ENCODE measurements at regions of chr5 and their contacts with region 1.

Region 1: GRCh38 chr5:180328296-180329137 is 24.6 kb downstream of the GFPT2 start:
- DNase-seq: peak; percentile 68 to 90 (median 86)
- ATAC-seq: peak; percentile 94
- H3K4me3 ChIP-seq: no peak overlapping the region
- H3K4me3 Mint-ChIP-seq: no peak overlapping the region
- H3K27ac ChIP-seq: no peak overlapping the region
- H3K27ac Mint-ChIP-seq: no peak overlapping the region
- H3K4me1 ChIP-seq: no peaks in the 10 kb centered on the region
- H3K4me1 Mint-ChIP-seq: no peaks in the 10 kb centered on the region
- H3K27me3 ChIP-seq: no peaks in the 10 kb centered on the region
- H3K27me3 Mint-ChIP-seq: peaks cover 14% of the 10 kb centered on the region
- CTCF ChIP-seq: peak; percentile 89

Region 2: DNA sequence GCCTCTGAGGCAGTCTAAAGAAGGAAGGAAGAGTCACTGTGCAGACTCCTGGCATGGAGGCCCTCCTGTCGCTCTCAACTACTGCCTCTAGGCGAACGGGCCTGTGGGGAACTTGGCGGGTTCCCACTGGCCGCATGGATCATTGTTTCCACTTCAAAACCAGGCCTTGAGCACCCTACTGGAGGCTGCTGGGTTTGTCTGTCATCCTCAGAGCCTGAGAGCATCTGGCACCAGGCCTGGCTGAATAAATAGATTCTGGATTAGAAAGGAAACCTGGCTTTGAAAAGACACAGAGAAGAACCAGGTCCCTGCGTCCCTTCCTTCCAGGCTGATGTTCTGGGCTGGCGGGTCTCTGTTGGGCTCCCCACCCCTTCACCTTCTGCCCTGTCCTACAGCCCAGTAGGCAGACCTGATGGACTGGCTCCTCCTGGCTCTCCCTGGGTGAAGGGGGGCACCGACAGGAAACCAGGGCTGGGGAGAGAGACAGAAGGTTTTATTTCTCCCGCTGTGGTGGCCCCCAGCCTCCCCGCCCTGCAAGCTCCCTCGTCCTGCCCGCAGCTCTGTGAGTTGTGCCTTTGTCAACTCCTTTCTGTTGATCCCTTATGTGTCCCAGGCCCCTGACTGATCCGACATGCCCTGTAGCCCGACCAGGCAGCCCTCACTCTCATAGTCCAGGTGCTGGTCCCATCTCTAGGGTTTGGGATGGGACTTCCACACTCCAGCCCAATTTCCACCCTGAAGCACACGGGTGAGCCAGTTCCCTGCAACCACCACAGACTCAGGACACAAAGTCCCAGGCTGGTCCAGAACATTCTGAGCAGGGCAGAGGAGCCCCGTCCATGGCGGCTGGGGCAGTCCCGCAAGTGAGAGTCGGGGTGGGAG is 1033.4 kb before region 1 on chr5:
- CTCF ChIA-PET with region 1: no interaction called
- POLR2A ChIA-PET with region 1: no interaction called
- intact Hi-C with region 1: no loop called
- DNase-seq: no peak
- ATAC-seq: no peak
- H3K4me3 ChIP-seq: no peak overlapping the region
- H3K4me3 Mint-ChIP-seq: no peak overlapping the region
- H3K27ac ChIP-seq: no peak overlapping the region
- H3K27ac Mint-ChIP-seq: no peak overlapping the region
- H3K4me1 ChIP-seq: no peaks in the 10 kb centered on the region
- H3K4me1 Mint-ChIP-seq: no peaks in the 10 kb centered on the region
- H3K27me3 ChIP-seq: no peaks in the 10 kb centered on the region
- H3K27me3 Mint-ChIP-seq: peaks cover 3% of the 10 kb centered on the region
- CTCF ChIP-seq: no peak

Region 3: GRCh38 chr5:180126726-180127681 is 201.5 kb before region 1 on chr5:
- CTCF ChIA-PET with region 1: interaction called, 8 read pairs
- POLR2A ChIA-PET with region 1: no interaction called
- intact Hi-C with region 1: loop called in 1 of 2 experiments (anchors 1 kb)
- DNase-seq: peak in 5 of 9 experiments; percentile 28 to 56 (median 44)
- ATAC-seq: no peak
- H3K4me3 ChIP-seq: no peak overlapping the region
- H3K4me3 Mint-ChIP-seq: no peak overlapping the region
- H3K27ac ChIP-seq: no peak overlapping the region
- H3K27ac Mint-ChIP-seq: no peak overlapping the region
- H3K4me1 ChIP-seq: no peaks in the 10 kb centered on the region
- H3K4me1 Mint-ChIP-seq: no peaks in the 10 kb centered on the region
- H3K27me3 ChIP-seq: no peaks in the 10 kb centered on the region
- H3K27me3 Mint-ChIP-seq: peaks cover 14% of the 10 kb centered on the region
- CTCF ChIP-seq: peak; percentile 77

Region 4: DNA sequence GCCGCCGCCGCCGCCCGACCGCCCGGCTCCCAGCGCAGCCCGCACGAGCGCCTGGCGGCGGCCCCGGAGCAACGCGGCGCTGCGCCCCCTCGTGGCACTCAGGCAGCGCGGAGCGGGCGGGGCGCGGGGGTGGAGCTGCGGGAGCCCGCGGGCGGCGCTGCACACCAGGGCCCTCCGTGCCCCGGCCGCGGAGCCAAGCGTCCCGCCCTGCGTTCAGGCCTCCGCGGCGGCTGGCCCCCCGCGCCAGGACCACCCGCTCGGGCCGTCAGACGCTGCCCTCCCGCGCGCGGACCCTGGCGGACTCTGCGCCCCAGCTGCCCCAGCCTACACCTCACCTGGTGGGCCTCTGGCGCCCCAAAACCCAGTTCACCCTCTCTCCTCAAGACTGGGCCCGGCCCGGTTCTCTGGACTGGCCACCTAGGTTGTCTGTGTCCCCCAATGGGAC is 119.4 kb before region 1 on chr5 and contains the start of gene RASGEF1C:
- CTCF ChIA-PET with region 1: no interaction called
- POLR2A ChIA-PET with region 1: no interaction called
- intact Hi-C with region 1: loop called in 1 of 2 experiments (anchors 10 kb)
- DNase-seq: peak; percentile 20 to 80 (median 57)
- ATAC-seq: peak; percentile 96
- H3K4me3 ChIP-seq: no peak within 1 kb of the TSS
- H3K4me3 Mint-ChIP-seq: peak within 1 kb of the TSS; percentile 67
- H3K27ac ChIP-seq: no peak within 1 kb of the TSS
- H3K27ac Mint-ChIP-seq: no peak within 1 kb of the TSS
- H3K4me1 ChIP-seq: no peaks in the 10 kb centered on the region
- H3K4me1 Mint-ChIP-seq: peaks cover 5% of the 10 kb centered on the region
- H3K27me3 ChIP-seq: peaks cover 14 to 19% of the 10 kb centered on the region in 2 experiments
- H3K27me3 Mint-ChIP-seq: peaks cover 53% of the 10 kb centered on the region
- CTCF ChIP-seq: no peak
- total RNA-seq, gene RASGEF1C: not detected

Region 5: DNA sequence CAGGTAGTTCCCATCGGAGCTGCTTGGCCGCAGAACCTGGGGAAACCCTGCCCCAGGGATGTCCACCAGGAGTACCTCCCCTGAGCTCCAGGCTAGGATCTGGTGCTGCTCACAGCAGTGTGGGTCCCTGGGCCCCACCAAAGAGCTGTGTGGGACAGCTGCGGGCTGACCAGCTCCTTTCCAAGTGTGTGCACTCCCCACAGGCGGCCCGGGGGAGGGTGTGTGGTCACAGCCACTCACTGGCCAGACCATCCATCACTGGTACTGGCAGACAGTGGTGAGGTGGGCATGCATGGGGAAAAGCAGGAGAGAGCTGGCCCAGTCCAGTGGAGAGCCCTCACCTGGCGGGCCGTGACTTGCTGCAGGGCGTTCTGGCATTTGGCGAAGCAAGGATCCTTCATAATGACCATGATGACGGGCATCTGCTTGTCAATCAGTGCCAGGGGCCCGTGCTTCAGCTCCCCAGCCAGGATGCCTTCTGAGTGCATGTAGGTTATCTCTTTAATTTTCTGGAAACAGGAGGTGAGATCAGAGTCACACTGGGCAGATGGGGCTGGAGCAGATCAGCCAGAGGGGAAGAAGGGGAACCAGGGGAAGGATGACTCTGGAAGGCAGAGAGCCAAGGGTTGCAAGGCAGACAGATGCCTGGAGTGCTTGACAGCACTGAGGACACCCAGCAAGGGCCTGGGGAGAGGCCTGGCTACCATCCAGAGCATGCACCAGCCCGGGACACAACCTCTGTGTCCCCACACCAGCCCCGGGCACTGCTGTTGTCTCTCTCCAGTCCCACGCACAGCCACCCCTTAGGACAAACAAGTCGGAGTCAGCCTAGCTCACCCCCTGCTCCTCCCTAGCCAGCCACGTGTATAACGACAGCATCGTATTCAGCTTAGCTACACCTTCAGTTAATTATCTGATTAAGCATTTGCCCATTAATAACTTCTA is 23.8 kb before region 1 on chr5:
- CTCF ChIA-PET with region 1: interaction called, 13 read pairs
- POLR2A ChIA-PET with region 1: no interaction called
- intact Hi-C with region 1: no loop called
- DNase-seq: no peak
- ATAC-seq: no peak
- H3K4me3 ChIP-seq: no peak overlapping the region
- H3K4me3 Mint-ChIP-seq: no peak overlapping the region
- H3K27ac ChIP-seq: no peak overlapping the region
- H3K27ac Mint-ChIP-seq: no peak overlapping the region
- H3K4me1 ChIP-seq: no peaks in the 10 kb centered on the region
- H3K4me1 Mint-ChIP-seq: no peaks in the 10 kb centered on the region
- H3K27me3 ChIP-seq: no peaks in the 10 kb centered on the region
- H3K27me3 Mint-ChIP-seq: peaks cover 4% of the 10 kb centered on the region
- CTCF ChIP-seq: no peak

Region 6: GRCh38 chr5:180315762-180316212 is 12.7 kb before region 1 on chr5:
- CTCF ChIA-PET with region 1: interaction called, 33 read pairs
- POLR2A ChIA-PET with region 1: interaction called, 4 read pairs
- intact Hi-C with region 1: no loop called
- DNase-seq: peak; percentile 51 to 85 (median 76)
- ATAC-seq: peak; percentile 97
- H3K4me3 ChIP-seq: no peak overlapping the region
- H3K4me3 Mint-ChIP-seq: no peak overlapping the region
- H3K27ac ChIP-seq: no peak overlapping the region
- H3K27ac Mint-ChIP-seq: no peak overlapping the region
- H3K4me1 ChIP-seq: no peaks in the 10 kb centered on the region
- H3K4me1 Mint-ChIP-seq: no peaks in the 10 kb centered on the region
- H3K27me3 ChIP-seq: no peaks in the 10 kb centered on the region
- H3K27me3 Mint-ChIP-seq: peaks cover 4% of the 10 kb centered on the region
- CTCF ChIP-seq: peak; percentile 98

Region 7: GRCh38 chr5:180343831-180344327 is 15.4 kb after region 1 on chr5:
- CTCF ChIA-PET with region 1: interaction called, 19 read pairs
- POLR2A ChIA-PET with region 1: no interaction called
- intact Hi-C with region 1: no loop called
- DNase-seq: no peak
- ATAC-seq: no peak
- H3K4me3 ChIP-seq: no peak overlapping the region
- H3K4me3 Mint-ChIP-seq: no peak overlapping the region
- H3K27ac ChIP-seq: no peak overlapping the region
- H3K27ac Mint-ChIP-seq: no peak overlapping the region
- H3K4me1 ChIP-seq: no peaks in the 10 kb centered on the region
- H3K4me1 Mint-ChIP-seq: no peaks in the 10 kb centered on the region
- H3K27me3 ChIP-seq: no peaks in the 10 kb centered on the region
- H3K27me3 Mint-ChIP-seq: peaks cover 8% of the 10 kb centered on the region
- CTCF ChIP-seq: no peak

Region 8: DNA sequence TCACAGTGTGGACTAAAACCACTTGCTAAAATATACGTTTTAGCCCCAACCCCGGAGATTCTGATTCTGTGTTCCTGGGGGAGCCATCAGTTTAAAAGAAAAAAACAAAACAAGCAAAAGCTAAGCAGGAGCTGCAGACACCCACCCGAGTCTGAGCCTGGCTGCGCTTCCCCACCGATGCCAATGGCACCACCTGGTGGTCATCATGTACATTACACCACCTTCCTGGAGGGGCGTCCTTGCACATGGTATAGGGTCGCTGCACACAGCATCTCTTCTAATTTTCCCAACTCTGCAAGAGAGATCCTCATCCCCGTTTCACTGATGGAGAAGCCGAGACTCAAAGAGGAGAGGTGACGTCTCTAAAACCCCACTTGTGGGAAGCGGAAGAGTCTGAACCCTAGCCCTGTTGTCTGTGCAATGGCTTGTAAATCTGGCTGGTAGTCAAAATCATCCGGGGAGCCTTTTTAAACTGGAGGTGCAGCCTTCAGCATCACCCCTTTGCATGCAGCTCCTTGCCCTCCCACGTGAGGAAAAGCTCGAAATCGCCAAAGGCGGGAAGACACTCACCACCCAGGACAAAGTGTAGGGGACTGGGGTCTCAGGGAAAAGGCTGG is 142.6 kb after region 1 on chr5:
- CTCF ChIA-PET with region 1: interaction called, 13 read pairs
- POLR2A ChIA-PET with region 1: no interaction called
- intact Hi-C with region 1: loop called in 1 of 2 experiments (anchors 1 kb)
- DNase-seq: peak; percentile 16 to 80 (median 61)
- ATAC-seq: peak; percentile 94
- H3K4me3 ChIP-seq: no peak overlapping the region
- H3K4me3 Mint-ChIP-seq: no peak overlapping the region
- H3K27ac ChIP-seq: no peak overlapping the region
- H3K27ac Mint-ChIP-seq: no peak overlapping the region
- H3K4me1 ChIP-seq: no peaks in the 10 kb centered on the region
- H3K4me1 Mint-ChIP-seq: no peaks in the 10 kb centered on the region
- H3K27me3 ChIP-seq: no peaks in the 10 kb centered on the region
- H3K27me3 Mint-ChIP-seq: peaks cover 2% of the 10 kb centered on the region
- CTCF ChIP-seq: peak; percentile 86

Measured in CD8-positive, alpha-beta T cell (primary cell).